Psoas muscle (tissue), 8 donors: ENCODE measurements at regions of chr15 and their contacts with region 1.

Region 1: GRCh38 chr15:38354315-38354929 is 99.5 kb upstream of the FAM98B start:
- DNase-seq: peak; percentile 29 to 45
- ATAC-seq: peak in 2 of 4 donors; percentile 47 to 71
- H3K4me3 ChIP-seq: no peak overlapping the region
- H3K27ac ChIP-seq: no peak overlapping the region
- H3K4me1 ChIP-seq: no peaks in the 10 kb centered on the region
- H3K27me3 ChIP-seq: no peaks in the 10 kb centered on the region
- CTCF ChIP-seq: peak; percentile 79

Region 2: DNA sequence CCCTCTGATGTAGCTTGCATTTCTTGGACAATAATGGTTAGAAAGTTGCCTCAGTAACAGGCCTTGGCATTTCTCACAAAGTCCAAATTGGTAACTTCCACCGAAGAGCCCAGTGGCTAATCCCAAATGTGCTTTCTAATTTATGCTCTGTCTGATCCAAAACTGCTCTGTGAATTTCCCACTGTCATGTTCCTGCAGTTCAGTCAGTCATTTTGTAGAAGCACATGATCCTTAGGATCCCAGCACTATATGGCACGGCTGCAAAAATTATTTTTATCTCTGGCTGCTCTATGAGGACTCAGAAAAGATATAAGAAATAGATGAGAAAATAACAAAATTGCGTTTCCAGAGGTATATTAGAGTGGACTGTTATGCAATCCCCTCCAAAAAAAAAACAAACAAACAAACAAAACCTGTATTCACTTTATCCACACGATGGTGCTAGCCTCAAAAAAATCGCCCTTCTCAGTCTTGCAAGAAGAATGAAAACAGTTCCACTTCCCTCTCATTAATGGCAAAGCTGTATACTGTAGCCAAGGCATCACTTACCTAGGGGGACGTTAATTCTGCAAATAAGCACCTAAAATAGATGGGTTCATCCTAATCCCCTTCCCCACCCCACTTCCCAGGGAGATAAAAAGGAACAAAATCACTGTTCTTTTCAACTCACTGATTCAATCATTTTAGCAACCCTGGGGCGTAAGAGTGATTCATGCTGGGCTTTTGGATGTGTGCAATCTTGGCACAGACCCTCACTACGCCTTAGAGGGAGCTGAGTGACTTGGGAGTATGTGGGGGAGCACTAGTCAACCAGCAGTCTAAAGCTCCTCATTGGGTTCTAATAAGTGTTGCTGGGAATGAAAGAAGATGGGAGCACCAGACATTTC is 358.7 kb before region 1 on chr15:
- intact Hi-C with region 1: loop called (anchors 2 to 5 kb)
- DNase-seq: peak in 1 of 2 donors; percentile 23
- ATAC-seq: peak in 3 of 4 donors; percentile 49 to 61 (median 54)
- H3K4me3 ChIP-seq: no peak overlapping the region
- H3K27ac ChIP-seq: no peak overlapping the region
- H3K4me1 ChIP-seq: no peaks in the 10 kb centered on the region
- H3K27me3 ChIP-seq: no peaks in the 10 kb centered on the region
- CTCF ChIP-seq: peak; percentile 53